CD8-positive, alpha-beta T cell (primary cell): ENCODE measurements at regions of chr11 and their contacts with region 1.

Region 1: GRCh38 chr11:72040726-72041441 is 39.5 kb downstream of the NUMA1 start:
- DNase-seq: peak; percentile 52 to 92 (median 85)
- ATAC-seq: peak; percentile 77
- H3K4me3 ChIP-seq: peak overlapping the region; percentile 80 to 82
- H3K4me3 Mint-ChIP-seq: no peak overlapping the region
- H3K27ac ChIP-seq: peak overlapping the region; percentile 93 to 96
- H3K27ac Mint-ChIP-seq: no peak overlapping the region
- H3K4me1 ChIP-seq: peaks cover 72% of the 10 kb centered on the region
- H3K4me1 Mint-ChIP-seq: peaks cover 40% of the 10 kb centered on the region
- H3K27me3 ChIP-seq: no peaks in the 10 kb centered on the region
- H3K27me3 Mint-ChIP-seq: no peaks in the 10 kb centered on the region
- CTCF ChIP-seq: no peak

Region 2: GRCh38 chr11:72024069-72024754 is 16.7 kb before region 1 on chr11:
- CTCF ChIA-PET with region 1: interaction called, 58 read pairs
- POLR2A ChIA-PET with region 1: interaction called, 27 read pairs
- intact Hi-C with region 1: loop called in 1 of 2 experiments (anchors 2 kb)
- DNase-seq: no peak
- ATAC-seq: no peak
- H3K4me3 ChIP-seq: no peak overlapping the region
- H3K4me3 Mint-ChIP-seq: no peak overlapping the region
- H3K27ac ChIP-seq: no peak overlapping the region
- H3K27ac Mint-ChIP-seq: no peak overlapping the region
- H3K4me1 ChIP-seq: peaks cover 22% of the 10 kb centered on the region
- H3K4me1 Mint-ChIP-seq: peaks cover 41% of the 10 kb centered on the region
- H3K27me3 ChIP-seq: no peaks in the 10 kb centered on the region
- H3K27me3 Mint-ChIP-seq: no peaks in the 10 kb centered on the region
- CTCF ChIP-seq: no peak

Region 3: GRCh38 chr11:72085621-72086351 is 44.9 kb after region 1 on chr11:
- CTCF ChIA-PET with region 1: interaction called, 55 read pairs
- POLR2A ChIA-PET with region 1: interaction called, 42 read pairs
- intact Hi-C with region 1: loop called (anchors 1 kb)
- DNase-seq: no peak
- ATAC-seq: no peak
- H3K4me3 ChIP-seq: no peak overlapping the region
- H3K4me3 Mint-ChIP-seq: no peak overlapping the region
- H3K27ac ChIP-seq: no peak overlapping the region
- H3K27ac Mint-ChIP-seq: peak overlapping the region; percentile 68
- H3K4me1 ChIP-seq: peaks cover 7% of the 10 kb centered on the region
- H3K4me1 Mint-ChIP-seq: peaks cover 16% of the 10 kb centered on the region
- H3K27me3 ChIP-seq: no peaks in the 10 kb centered on the region
- H3K27me3 Mint-ChIP-seq: no peaks in the 10 kb centered on the region
- CTCF ChIP-seq: no peak

Region 4: GRCh38 chr11:72102946-72103753 is 62.3 kb after region 1 on chr11 and contains the start of gene LAMTOR1:
- CTCF ChIA-PET with region 1: interaction called, 3 read pairs
- POLR2A ChIA-PET with region 1: interaction called, 5 read pairs
- intact Hi-C with region 1: loop called in 1 of 2 experiments (anchors 1 kb)
- DNase-seq: peak; percentile 93 to 99 (median 98)
- ATAC-seq: peak; percentile 96
- H3K4me3 ChIP-seq: peak within 1 kb of the TSS; percentile 67 to 93
- H3K4me3 Mint-ChIP-seq: peak within 1 kb of the TSS; percentile 74
- H3K27ac ChIP-seq: peak within 1 kb of the TSS; percentile 90 to 97
- H3K27ac Mint-ChIP-seq: peak within 1 kb of the TSS; percentile 88
- H3K4me1 ChIP-seq: peaks cover 22% of the 10 kb centered on the region
- H3K4me1 Mint-ChIP-seq: peaks cover 45% of the 10 kb centered on the region
- H3K27me3 ChIP-seq: no peaks in the 10 kb centered on the region
- H3K27me3 Mint-ChIP-seq: no peaks in the 10 kb centered on the region
- CTCF ChIP-seq: no peak
- total RNA-seq, gene LAMTOR1: 27.1 to 30.4 TPM